ENCODE measurements at regions of chr2 and their contacts with region 1.

Region 1: GRCh38 chr2:196337208-196337953 is 166.0 kb upstream of the STK17B start:
- H3K4me3 ChIP-seq: no peak overlapping the region
- H3K27ac ChIP-seq: no peak overlapping the region
- H3K4me1 ChIP-seq: no peaks in the 10 kb centered on the region
- CTCF ChIP-seq: no peak

Region 2: GRCh38 chr2:196242131-196242620 is 95.2 kb before region 1 on chr2:
- CTCF ChIA-PET with region 1: no interaction called
- POLR2A ChIA-PET with region 1: no interaction called
- H3K4me3 ChIP-seq: no peak overlapping the region
- H3K27ac ChIP-seq: no peak overlapping the region
- H3K4me1 ChIP-seq: no peaks in the 10 kb centered on the region
- CTCF ChIP-seq: no peak

Region 3: GRCh38 chr2:196293751-196294512 is 43.4 kb before region 1 on chr2:
- CTCF ChIA-PET with region 1: interaction called, 31 read pairs
- POLR2A ChIA-PET with region 1: no interaction called
- H3K4me3 ChIP-seq: no peak overlapping the region
- H3K27ac ChIP-seq: no peak overlapping the region
- H3K4me1 ChIP-seq: peaks cover 5% of the 10 kb centered on the region; the same call in 1 of the 2 replicates
- CTCF ChIP-seq: no peak

Region 4: DNA sequence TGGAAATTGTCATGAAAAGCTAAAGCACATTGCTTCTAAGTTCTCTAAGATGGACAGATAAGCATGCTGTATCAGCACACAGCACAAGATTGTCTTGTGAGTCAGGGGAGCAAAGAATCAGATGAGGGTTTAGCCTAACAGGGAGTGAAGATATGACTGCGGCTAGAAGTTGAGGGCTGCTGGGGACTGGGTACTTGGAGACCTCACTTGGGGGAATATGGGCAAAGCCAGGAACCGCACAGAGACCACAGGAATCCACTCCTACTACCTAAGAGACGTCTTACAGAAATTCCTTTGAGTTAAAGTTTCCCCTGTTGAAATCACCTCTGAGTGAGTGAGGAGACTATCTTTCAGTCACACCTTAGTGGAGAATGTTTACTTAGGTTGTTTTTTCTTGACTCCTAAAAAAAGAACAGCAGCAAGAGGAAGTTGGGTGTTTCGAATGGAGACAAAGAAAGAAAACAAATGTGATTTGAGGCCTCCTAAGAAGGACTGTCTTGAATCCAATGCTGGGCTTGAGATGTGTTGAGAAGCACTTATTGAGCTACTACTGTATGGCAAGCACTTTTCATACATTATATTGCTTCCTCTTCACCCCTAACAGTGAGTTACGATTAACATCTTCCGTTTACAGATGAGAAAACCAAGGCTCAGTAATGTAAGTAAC is 872.5 kb after region 1 on chr2:
- CTCF ChIA-PET with region 1: no interaction called
- POLR2A ChIA-PET with region 1: no interaction called
- H3K4me3 ChIP-seq: no peak overlapping the region
- H3K27ac ChIP-seq: no peak overlapping the region
- H3K4me1 ChIP-seq: no peaks in the 10 kb centered on the region
- CTCF ChIP-seq: no peak

Measured in HEK293 (cell line).